HepG2 (cell line): ENCODE measurements at regions of chr6 and their contacts with region 1.

Region 1: DNA sequence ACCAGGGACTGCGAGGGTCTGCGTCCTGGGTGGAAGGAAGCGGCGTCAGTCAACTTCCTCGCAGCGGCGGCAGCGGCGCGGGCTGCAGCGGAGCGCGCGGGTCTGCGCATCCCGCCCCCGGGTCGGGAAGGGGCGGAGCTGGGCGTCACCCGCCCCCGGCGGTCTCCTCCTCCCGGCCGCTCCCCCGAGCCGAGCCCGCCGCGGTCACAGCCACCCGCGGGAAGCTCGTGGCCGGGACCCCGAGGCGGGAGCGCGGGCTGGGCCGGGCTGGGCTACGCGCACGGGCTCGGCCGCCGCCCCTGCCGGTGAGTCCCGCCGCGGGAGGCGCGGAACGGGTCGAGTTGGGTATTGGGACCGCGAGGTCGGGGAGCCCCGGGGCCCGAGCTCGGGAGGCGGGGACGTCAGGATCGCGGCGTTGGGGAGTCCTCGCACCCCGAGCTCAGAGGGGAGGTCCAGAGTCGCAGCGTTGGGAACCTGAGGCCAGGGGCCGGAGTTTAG is at the start of gene PAQR8:
- DNase-seq: no peak
- ATAC-seq: peak; percentile 89
- H3K4me3 ChIP-seq: peak within 1 kb of the TSS; percentile 79 to 100 (median 95)
- H3K27ac ChIP-seq: peak within 1 kb of the TSS; percentile 60
- H3K4me1 ChIP-seq: peaks cover 62% of the 10 kb centered on the region
- H3K27me3 ChIP-seq: no peaks in the 10 kb centered on the region; a peak in 1 of 5 replicates
- CTCF ChIP-seq: no peak
- EP300 ChIP-seq: no peak; a peak in 1 of 4 replicates
- POLR2A ChIP-seq: peak in 1 of 2 experiments; percentile 73; a peak in 2 of 4 replicates
- RAD21 ChIP-seq: peak; percentile 69
- total RNA-seq, gene PAQR8: 26.2 and 37.7 TPM in 2 replicates

Region 2: GRCh38 chr6:52020945-52021570 is 340.9 kb before region 1 on chr6:
- CTCF ChIA-PET with region 1: no interaction called
- POLR2A ChIA-PET with region 1: no interaction called
- in situ Hi-C with region 1: no loop called
- intact Hi-C with region 1: no loop called
- DNase-seq: peak; percentile 36
- ATAC-seq: no peak; the same call in 2 of the 3 replicates
- H3K4me3 ChIP-seq: no peak overlapping the region
- H3K27ac ChIP-seq: no peak overlapping the region
- H3K4me1 ChIP-seq: peaks cover 21% of the 10 kb centered on the region
- H3K27me3 ChIP-seq: no peaks in the 10 kb centered on the region
- CTCF ChIP-seq: peak; percentile 73
- EP300 ChIP-seq: no peak
- POLR2A ChIP-seq: no peak
- RAD21 ChIP-seq: peak; percentile 52; the same call in 1 of the 2 replicates

Region 3: DNA sequence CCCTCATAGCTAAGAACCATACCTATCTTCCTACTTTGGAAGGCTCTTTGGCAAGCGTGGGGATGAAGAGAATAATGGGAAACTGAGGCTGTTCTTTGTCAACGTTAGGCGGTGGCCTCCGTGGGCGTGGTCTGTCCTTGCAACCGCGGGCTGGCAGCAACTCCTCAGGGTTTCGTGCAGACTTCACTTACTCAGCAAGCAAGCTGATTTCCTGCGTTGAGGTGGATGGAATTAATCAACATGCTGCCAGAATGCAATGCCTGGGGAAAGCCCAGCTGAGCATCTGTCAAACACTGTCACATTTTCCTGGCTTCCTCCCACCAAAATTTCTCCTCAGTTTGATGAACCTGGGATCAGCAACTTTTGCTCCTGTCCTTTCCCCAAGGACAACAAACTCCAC is 108.5 kb before region 1 on chr6:
- CTCF ChIA-PET with region 1: no interaction called
- POLR2A ChIA-PET with region 1: no interaction called
- in situ Hi-C with region 1: no loop called
- intact Hi-C with region 1: no loop called
- DNase-seq: no peak
- ATAC-seq: no peak
- H3K4me3 ChIP-seq: no peak overlapping the region
- H3K27ac ChIP-seq: no peak overlapping the region
- H3K4me1 ChIP-seq: peaks cover 22% of the 10 kb centered on the region
- H3K27me3 ChIP-seq: peaks cover 0 to 20% of the 10 kb centered on the region in 2 experiments; a peak in 4 of 5 replicates
- CTCF ChIP-seq: no peak
- EP300 ChIP-seq: no peak
- POLR2A ChIP-seq: no peak
- RAD21 ChIP-seq: no peak

Region 4: DNA sequence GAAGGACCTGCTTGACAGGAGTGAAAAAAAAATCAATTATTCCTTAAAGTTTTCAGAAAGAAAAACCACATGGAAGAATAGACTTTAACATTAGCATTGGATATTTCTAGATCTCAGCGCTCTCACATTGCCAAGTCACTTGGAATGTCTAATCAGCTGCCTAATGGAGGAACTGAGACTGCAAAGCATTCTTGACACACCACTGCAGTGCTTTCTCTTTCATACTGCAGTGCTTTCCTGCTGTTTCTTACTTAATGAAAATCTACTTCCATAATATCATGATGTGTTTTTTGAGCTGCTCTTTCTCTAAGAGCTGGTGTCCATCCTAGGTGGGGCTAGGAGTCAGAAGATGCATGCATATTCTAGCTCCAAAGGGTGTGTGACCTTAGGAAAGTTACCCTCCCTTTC is 57.0 kb before region 1 on chr6:
- CTCF ChIA-PET with region 1: no interaction called
- POLR2A ChIA-PET with region 1: interaction called, 4 read pairs
- in situ Hi-C with region 1: no loop called
- intact Hi-C with region 1: loop called (anchors 5 kb)
- DNase-seq: no peak
- ATAC-seq: no peak
- H3K4me3 ChIP-seq: no peak overlapping the region
- H3K27ac ChIP-seq: peak overlapping the region; percentile 82
- H3K4me1 ChIP-seq: peaks cover 71% of the 10 kb centered on the region
- H3K27me3 ChIP-seq: no peaks in the 10 kb centered on the region
- CTCF ChIP-seq: no peak
- EP300 ChIP-seq: no peak
- POLR2A ChIP-seq: no peak
- RAD21 ChIP-seq: no peak

Region 5: DNA sequence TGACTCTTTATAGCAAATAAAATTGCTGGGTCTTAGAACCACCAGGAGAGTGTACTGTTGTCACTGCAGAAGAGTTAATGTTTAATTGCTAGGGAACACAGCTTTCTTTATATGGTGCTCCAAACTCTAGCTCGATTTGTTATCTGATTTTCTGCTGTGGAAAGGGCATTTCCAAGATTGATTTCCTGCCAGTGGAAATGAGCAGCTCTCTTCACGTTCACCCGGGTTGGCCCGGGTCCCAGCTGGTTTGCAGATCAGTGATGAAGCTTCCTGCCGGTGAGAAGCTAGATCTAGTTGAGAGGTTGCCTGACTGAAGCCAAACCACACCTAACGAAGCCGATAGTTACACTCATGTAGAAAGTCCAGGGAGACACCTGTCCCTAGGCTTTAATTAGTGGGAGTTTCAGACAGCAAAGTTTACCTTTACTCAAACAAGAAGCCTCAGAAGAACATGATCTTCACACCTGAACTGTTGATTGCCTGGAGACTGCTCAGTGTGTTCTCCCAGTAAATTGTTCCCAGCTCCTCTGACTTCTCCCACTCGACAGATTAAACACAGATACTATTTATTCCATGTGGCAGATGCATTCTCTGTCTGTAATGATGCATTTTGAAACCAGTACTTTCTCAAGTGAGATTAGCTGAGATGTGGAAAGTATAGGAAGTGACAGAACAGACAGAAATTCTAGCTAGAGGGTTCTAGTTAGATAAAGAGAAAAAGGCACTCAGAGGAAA is 27.8 kb after region 1 on chr6:
- CTCF ChIA-PET with region 1: no interaction called
- POLR2A ChIA-PET with region 1: interaction called, 23 read pairs
- in situ Hi-C with region 1: no loop called
- intact Hi-C with region 1: no loop called
- DNase-seq: peak; percentile 94
- ATAC-seq: peak; percentile 94
- H3K4me3 ChIP-seq: peak overlapping the region; percentile 11 to 56 (median 30)
- H3K27ac ChIP-seq: peak overlapping the region; percentile 84
- H3K4me1 ChIP-seq: peaks cover 53% of the 10 kb centered on the region
- H3K27me3 ChIP-seq: no peaks in the 10 kb centered on the region
- CTCF ChIP-seq: peak; percentile 42
- EP300 ChIP-seq: peak in 1 of 2 experiments; percentile 68; a peak in 2 of 4 replicates
- POLR2A ChIP-seq: peak in 1 of 2 experiments; percentile 34; a peak in 2 of 4 replicates
- RAD21 ChIP-seq: no peak

Region 6: GRCh38 chr6:52399511-52400312 is 37.7 kb after region 1 on chr6:
- CTCF ChIA-PET with region 1: interaction called, 5 read pairs
- POLR2A ChIA-PET with region 1: no interaction called
- in situ Hi-C with region 1: no loop called
- intact Hi-C with region 1: loop called (anchors 1 kb)
- DNase-seq: peak; percentile 77
- ATAC-seq: peak; percentile 88
- H3K4me3 ChIP-seq: no peak overlapping the region
- H3K27ac ChIP-seq: peak overlapping the region; percentile 49
- H3K4me1 ChIP-seq: peaks cover 57% of the 10 kb centered on the region
- H3K27me3 ChIP-seq: no peaks in the 10 kb centered on the region
- CTCF ChIP-seq: peak; percentile 89
- EP300 ChIP-seq: peak in 1 of 2 experiments; percentile 38; a peak in 1 of 4 replicates
- POLR2A ChIP-seq: no peak
- RAD21 ChIP-seq: peak; percentile 94